ENCODE measurements at regions of chr16 and their contacts with region 1.

Region 1: DNA sequence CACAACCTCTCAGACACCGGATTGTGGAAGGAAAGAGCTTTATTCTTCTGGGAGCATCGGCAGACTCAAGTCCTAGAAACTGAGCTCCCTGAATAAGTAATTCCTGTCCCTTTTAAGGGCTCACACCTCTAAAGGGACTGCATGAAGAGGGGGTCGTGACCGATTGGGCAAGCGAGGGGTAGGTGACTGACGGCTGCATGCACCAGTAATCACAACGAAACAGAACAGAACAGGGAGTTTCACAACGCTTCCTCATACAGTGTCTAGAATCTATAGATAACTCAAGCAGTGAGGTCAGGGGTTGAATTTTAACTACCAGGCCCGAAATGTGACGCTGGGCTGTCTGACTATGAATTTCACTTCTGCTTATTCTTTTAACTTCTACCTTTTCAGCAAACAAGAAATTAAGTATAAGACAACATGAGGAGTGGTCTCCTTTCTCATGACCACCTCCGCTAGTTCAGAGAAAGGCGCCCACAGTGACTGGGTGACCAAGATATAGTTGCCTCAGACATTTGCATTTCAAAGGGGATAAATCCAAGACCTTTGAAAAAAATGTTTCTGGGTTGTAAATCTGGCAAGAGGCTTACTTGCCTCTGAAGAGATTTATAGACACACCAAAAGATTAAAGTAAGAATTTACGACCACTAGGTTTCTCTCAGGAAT is 88.4 kb upstream of the ATF7IP2 start:
- DNase-seq: peak; percentile 43
- ATAC-seq: peak; percentile 94
- H3K4me3 Mint-ChIP-seq: peak overlapping the region; percentile 69
- H3K27ac Mint-ChIP-seq: peak overlapping the region; percentile 97
- H3K4me1 Mint-ChIP-seq: peaks cover 62% of the 10 kb centered on the region
- H3K27me3 Mint-ChIP-seq: no peaks in the 10 kb centered on the region
- CTCF ChIP-seq: no peak

Region 2: GRCh38 chr16:10172848-10173655 is 124.4 kb before region 1 on chr16:
- CTCF ChIA-PET with region 1: no interaction called
- POLR2A ChIA-PET with region 1: no interaction called
- intact Hi-C with region 1: no loop called
- DNase-seq: no peak
- ATAC-seq: no peak
- H3K4me3 Mint-ChIP-seq: no peak overlapping the region
- H3K27ac Mint-ChIP-seq: no peak overlapping the region
- H3K4me1 Mint-ChIP-seq: no peaks in the 10 kb centered on the region
- H3K27me3 Mint-ChIP-seq: peaks cover 23% of the 10 kb centered on the region
- CTCF ChIP-seq: no peak

Region 3: DNA sequence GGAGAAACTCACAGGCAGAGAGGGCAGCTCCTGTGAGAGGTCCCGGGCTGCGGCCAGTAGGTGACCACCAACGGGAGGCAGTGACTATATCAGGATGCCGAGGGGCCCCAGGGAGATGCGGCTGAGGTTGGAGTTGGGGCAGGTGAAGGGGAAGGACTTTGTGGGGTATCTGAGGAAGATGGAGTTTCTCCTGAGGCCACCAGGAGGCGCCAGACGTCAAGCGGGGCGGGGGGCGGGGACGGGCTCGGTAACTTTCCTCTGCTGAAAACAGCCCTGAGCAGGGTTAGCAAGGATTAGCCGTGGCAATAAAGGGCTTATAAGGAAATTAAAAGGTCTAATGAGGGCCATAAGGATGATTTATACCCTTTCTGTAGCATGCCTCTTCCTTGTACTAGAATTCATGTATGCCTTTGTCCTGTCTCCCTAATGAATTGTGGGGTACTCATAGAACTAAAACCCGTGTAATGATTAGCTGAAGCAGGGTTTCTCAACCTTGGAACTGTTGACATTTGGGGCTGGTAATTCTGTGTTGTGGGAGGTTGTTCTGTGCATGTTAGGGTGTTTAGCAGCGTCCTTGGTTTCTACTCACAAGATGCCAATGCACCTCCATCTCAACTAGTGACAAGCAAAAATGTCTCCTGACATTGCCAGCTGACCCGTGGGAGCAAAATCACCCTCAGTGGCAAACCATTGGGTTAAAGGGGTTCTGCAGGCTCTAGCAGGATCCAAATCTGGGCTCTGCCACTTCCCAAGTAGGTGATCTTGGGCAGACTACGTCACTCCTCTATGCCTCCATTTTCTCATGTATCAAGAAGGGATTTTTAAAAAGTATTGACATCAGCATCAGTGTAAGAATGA is 40.5 kb before region 1 on chr16:
- CTCF ChIA-PET with region 1: interaction called, 6 read pairs
- POLR2A ChIA-PET with region 1: interaction called, 8 read pairs
- intact Hi-C with region 1: loop called (anchors 1 kb)
- DNase-seq: peak; percentile 56
- ATAC-seq: peak; percentile 83
- H3K4me3 Mint-ChIP-seq: peak overlapping the region; percentile 71
- H3K27ac Mint-ChIP-seq: peak overlapping the region; percentile 47
- H3K4me1 Mint-ChIP-seq: peaks cover 42% of the 10 kb centered on the region
- H3K27me3 Mint-ChIP-seq: no peaks in the 10 kb centered on the region
- CTCF ChIP-seq: no peak

Region 4: GRCh38 chr16:10282367-10282766 is 15.1 kb before region 1 on chr16:
- CTCF ChIA-PET with region 1: no interaction called
- POLR2A ChIA-PET with region 1: no interaction called
- intact Hi-C with region 1: no loop called
- DNase-seq: no peak
- ATAC-seq: no peak
- H3K4me3 Mint-ChIP-seq: no peak overlapping the region
- H3K27ac Mint-ChIP-seq: no peak overlapping the region
- H3K4me1 Mint-ChIP-seq: peaks cover 4% of the 10 kb centered on the region
- H3K27me3 Mint-ChIP-seq: no peaks in the 10 kb centered on the region
- CTCF ChIP-seq: no peak

Region 5: GRCh38 chr16:10314811-10315210 is 17.3 kb after region 1 on chr16:
- CTCF ChIA-PET with region 1: interaction called, 3 read pairs
- POLR2A ChIA-PET with region 1: interaction called, 18 read pairs
- intact Hi-C with region 1: loop called (anchors 1 kb)
- DNase-seq: no peak
- ATAC-seq: no peak
- H3K4me3 Mint-ChIP-seq: no peak overlapping the region
- H3K27ac Mint-ChIP-seq: peak overlapping the region; percentile 63
- H3K4me1 Mint-ChIP-seq: peaks cover 22% of the 10 kb centered on the region
- H3K27me3 Mint-ChIP-seq: no peaks in the 10 kb centered on the region
- CTCF ChIP-seq: no peak

Region 6: DNA sequence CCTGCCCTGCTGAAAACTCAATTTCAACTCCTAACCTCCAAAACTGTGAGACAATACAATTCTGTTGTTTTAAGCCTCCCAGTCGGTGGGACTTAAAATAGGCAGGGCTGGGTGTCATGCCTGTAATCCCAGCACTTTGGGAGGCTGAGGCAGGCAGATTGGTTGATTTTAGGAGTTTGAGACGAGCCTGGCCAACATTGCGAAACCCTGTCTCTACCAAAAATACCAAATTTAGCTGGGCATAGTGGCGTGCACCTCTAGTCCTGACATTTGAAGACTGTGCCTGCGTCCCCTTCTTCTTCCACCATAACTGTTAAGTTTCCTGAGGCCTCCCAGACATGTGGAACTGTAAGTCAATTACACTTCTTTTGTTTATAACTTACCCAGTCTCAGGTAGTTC is 52.4 kb after region 1 on chr16:
- CTCF ChIA-PET with region 1: no interaction called
- POLR2A ChIA-PET with region 1: no interaction called
- intact Hi-C with region 1: no loop called
- DNase-seq: no peak
- ATAC-seq: no peak
- H3K4me3 Mint-ChIP-seq: no peak overlapping the region
- H3K27ac Mint-ChIP-seq: no peak overlapping the region
- H3K4me1 Mint-ChIP-seq: peaks cover 3% of the 10 kb centered on the region
- H3K27me3 Mint-ChIP-seq: no peaks in the 10 kb centered on the region
- CTCF ChIP-seq: no peak

Region 7: GRCh38 chr16:10362077-10362863 is 64.8 kb after region 1 on chr16:
- CTCF ChIA-PET with region 1: no interaction called
- POLR2A ChIA-PET with region 1: no interaction called
- intact Hi-C with region 1: loop called (anchors 1 kb)
- DNase-seq: no peak
- ATAC-seq: peak; percentile 84
- H3K4me3 Mint-ChIP-seq: peak overlapping the region; percentile 56
- H3K27ac Mint-ChIP-seq: peak overlapping the region; percentile 50
- H3K4me1 Mint-ChIP-seq: peaks cover 15% of the 10 kb centered on the region
- H3K27me3 Mint-ChIP-seq: no peaks in the 10 kb centered on the region
- CTCF ChIP-seq: no peak

Region 8: DNA sequence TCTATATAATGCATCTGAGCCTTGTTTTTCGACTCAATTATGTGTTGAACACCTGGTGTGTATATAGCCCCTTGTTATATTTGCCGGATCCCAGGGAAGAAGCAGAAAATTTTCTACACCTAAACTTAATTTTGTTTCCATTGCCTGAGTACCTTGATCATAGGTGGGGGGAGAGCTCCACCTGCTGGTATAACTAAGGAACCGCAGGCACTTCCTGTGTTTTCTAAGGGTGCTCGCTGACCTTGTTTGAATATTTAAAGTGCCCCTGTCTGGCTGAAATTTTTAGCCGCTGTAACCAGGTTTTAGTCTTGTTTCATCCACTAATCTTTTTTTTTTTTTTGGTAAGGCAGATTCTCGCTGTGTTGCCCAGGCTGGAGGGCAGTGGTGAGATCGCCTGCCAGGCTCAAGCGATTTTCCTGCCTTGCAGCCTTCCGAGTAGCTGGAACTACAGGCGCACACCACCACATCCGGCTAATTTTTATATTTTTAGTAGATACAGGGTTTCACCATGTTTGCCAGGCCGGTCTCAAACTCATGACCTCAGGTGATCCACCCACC is 439.7 kb after region 1 on chr16:
- CTCF ChIA-PET with region 1: no interaction called
- POLR2A ChIA-PET with region 1: interaction called, 8 read pairs
- intact Hi-C with region 1: loop called (anchors 2 kb)
- DNase-seq: no peak
- ATAC-seq: peak; percentile 65
- H3K4me3 Mint-ChIP-seq: peak overlapping the region; percentile 68
- H3K27ac Mint-ChIP-seq: peak overlapping the region; percentile 90
- H3K4me1 Mint-ChIP-seq: peaks cover 51% of the 10 kb centered on the region
- H3K27me3 Mint-ChIP-seq: no peaks in the 10 kb centered on the region
- CTCF ChIP-seq: peak; percentile 60

Region 9: GRCh38 chr16:10944249-10945064 is 647.0 kb after region 1 on chr16 and contains the start of gene CLEC16A:
- CTCF ChIA-PET with region 1: no interaction called
- POLR2A ChIA-PET with region 1: interaction called, 3 read pairs
- intact Hi-C with region 1: loop called (anchors 10 kb)
- DNase-seq: peak; percentile 97
- ATAC-seq: peak; percentile 74
- H3K4me3 Mint-ChIP-seq: peak within 1 kb of the TSS; percentile 90
- H3K27ac Mint-ChIP-seq: peak within 1 kb of the TSS; percentile 81
- H3K4me1 Mint-ChIP-seq: peaks cover 83% of the 10 kb centered on the region
- H3K27me3 Mint-ChIP-seq: no peaks in the 10 kb centered on the region
- CTCF ChIP-seq: no peak
- total RNA-seq, gene CLEC16A: 53.4 and 57.6 TPM in 2 replicates